GM10248 (cell line): ENCODE measurements at regions of chr3 and their contacts with region 1.

Region 1: GRCh38 chr3:141360888-141361598 is 7.3 kb upstream of the ZBTB38 start:
- DNase-seq: peak; percentile 72
- CTCF ChIP-seq: peak; percentile 70

Region 2: GRCh38 chr3:141152801-141153678 is 208.0 kb before region 1 on chr3:
- CTCF ChIA-PET with region 1: no interaction called
- POLR2A ChIA-PET with region 1: no interaction called
- DNase-seq: no peak
- CTCF ChIP-seq: no peak

Region 3: GRCh38 chr3:141218162-141218835 is 142.7 kb before region 1 on chr3:
- CTCF ChIA-PET with region 1: no interaction called
- POLR2A ChIA-PET with region 1: no interaction called
- DNase-seq: no peak
- CTCF ChIP-seq: no peak

Region 4: DNA sequence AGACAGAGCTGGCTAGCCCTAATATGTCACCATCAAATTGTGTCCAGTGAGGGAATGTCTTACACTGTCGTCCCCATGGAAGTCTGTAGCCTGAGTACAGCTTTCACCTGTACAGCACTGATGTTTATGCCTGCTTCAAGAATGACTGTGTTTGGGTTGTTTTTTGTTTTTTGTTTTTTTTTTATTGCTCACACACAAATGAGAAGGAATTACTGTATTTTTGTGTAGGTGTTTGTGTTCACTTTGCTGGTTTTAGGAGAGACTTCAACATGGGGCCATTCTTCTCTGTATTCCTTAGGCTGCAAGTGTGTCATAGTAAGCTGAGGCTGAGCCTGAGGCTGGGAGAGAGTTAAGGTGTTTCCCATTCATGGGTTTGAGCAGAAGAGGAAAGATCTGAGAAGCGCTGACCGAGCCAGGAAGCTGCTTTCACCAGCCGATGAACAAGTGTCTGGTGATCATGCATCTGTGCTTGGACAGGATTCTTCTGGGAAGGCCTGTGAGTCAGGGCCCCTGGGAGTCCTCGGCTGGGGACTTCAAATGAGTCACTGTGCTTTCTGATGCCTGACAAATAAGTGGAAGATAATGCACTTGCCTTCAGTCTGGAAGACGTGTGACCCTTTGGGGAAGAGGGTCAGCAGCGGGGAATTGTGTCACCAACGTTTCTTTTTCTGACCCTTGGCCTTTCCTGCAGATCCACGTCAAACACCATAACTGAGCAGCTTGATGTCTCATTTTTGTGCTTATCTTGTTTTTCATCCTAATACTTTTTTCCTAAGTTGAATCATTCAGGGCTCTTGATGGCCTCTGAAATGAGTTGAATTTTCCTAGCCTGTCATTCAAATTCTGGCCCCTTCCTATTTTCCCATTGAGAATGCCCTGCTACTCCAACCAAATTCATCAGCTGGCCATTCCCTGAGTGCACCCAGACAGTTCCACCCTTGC is 29.4 kb before region 1 on chr3:
- CTCF ChIA-PET with region 1: interaction called, 16 read pairs
- POLR2A ChIA-PET with region 1: no interaction called
- DNase-seq: no peak
- CTCF ChIP-seq: no peak

Region 5: GRCh38 chr3:141346418-141346817 is 14.6 kb before region 1 on chr3:
- CTCF ChIA-PET with region 1: interaction called, 96 read pairs
- POLR2A ChIA-PET with region 1: no interaction called
- DNase-seq: no peak
- CTCF ChIP-seq: no peak

Region 6: DNA sequence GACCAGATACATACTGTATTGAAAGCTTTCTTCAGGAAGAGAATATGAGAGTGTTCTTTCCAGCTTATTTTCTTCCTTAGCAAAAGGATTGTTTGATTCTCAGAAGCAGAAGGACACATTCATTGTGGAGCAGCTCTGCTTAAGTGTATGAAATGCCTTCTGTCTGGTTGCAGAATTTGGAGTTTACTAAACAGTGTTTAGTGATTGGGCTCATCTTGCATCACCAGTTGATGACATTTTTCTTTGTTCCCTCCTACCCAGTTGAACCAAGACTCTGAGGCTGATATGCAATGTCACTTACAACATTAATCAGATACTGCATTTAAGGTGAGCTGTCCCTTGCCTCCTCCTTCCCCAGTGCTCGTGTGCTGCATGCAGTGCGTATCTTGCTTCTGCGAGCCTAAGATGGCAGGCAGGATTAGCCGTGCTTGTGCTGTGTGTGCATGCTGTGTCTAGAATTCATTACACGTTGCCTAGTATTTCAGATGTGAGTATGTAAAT is 25.6 kb after region 1 on chr3:
- CTCF ChIA-PET with region 1: interaction called, 143 read pairs
- POLR2A ChIA-PET with region 1: no interaction called
- DNase-seq: no peak
- CTCF ChIP-seq: no peak

Region 7: GRCh38 chr3:141412087-141412935 is 51.3 kb after region 1 on chr3:
- CTCF ChIA-PET with region 1: interaction called, 19 read pairs
- POLR2A ChIA-PET with region 1: no interaction called
- DNase-seq: peak; percentile 39
- CTCF ChIP-seq: no peak

Region 8: DNA sequence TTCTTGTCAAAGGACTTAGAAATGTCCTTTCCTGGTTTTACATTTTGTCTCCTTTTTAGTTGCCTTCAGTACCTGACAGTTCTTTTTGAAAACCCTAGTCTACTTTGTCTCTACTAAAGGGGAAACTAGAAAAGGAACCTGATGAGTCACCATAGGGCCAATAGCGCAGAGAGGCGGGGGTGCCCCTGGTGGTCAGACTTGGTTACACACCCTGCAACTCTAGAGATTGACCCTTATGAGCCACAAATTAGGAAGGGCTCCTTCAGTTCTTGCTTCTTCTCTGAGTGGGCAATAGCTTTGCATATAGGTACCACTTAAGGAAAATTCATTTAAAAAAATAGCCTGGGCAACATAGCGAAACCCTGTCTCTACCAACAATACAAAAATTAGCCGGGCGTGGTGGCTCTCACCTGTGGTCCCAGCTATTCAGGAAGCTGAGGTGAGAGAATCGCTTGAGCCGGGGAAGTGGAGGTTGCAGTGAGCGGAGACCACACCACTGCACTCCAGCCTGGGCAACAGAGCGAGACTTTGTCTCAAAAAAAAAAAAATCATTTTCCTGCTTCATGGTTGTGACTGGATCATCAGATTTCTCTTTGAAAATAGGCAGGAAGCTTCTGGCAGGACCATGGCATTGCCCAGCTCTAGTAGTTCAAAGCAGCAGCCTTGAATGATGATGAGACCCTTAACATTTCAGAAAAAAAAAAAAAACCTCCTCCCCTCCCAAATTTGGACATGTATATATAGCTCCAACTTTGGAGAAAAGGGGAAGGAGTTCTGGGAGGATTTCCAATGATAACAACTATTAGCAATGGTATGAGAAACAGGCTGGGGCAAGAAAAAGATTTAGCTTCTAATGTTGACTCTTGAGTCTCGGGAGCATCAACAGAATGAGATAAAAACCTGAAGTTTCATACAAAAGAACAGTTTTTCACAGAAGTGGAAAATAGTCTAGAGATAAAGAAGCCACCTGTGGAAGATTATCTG is 80.6 kb after region 1 on chr3:
- CTCF ChIA-PET with region 1: interaction called, 45 read pairs
- POLR2A ChIA-PET with region 1: interaction called, 3 read pairs
- DNase-seq: peak; percentile 85
- CTCF ChIP-seq: peak; percentile 63